Naive thymus-derived CD8-positive, alpha-beta T cell (primary cell): ENCODE measurements at regions of chr18 and their contacts with region 1.

Region 1: DNA sequence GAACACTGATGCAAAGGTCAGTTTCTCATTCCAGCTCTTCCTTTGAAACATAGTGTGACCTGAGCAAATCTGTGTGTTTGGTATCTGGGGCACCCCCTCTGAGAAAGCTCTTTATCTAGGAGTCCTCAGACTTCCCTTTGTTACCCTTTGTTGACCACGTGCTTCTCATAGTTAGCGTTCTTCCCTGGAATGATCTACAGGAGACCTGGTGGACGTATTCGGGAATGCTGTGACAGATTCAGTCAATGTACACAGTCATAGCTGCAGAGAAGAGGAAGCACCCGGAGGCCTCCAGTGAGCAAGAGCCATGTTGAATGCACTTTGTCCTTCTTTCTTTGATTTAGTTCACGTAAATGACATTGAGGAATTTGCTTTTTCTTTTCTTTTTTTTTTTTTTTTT is 10.7 kb upstream of the CHMP1B start:
- DNase-seq: no peak
- ATAC-seq: no peak
- H3K4me3 Mint-ChIP-seq: no peak overlapping the region
- H3K27ac Mint-ChIP-seq: no peak overlapping the region
- H3K4me1 Mint-ChIP-seq: no peaks in the 10 kb centered on the region
- H3K27me3 Mint-ChIP-seq: no peaks in the 10 kb centered on the region

Region 2: DNA sequence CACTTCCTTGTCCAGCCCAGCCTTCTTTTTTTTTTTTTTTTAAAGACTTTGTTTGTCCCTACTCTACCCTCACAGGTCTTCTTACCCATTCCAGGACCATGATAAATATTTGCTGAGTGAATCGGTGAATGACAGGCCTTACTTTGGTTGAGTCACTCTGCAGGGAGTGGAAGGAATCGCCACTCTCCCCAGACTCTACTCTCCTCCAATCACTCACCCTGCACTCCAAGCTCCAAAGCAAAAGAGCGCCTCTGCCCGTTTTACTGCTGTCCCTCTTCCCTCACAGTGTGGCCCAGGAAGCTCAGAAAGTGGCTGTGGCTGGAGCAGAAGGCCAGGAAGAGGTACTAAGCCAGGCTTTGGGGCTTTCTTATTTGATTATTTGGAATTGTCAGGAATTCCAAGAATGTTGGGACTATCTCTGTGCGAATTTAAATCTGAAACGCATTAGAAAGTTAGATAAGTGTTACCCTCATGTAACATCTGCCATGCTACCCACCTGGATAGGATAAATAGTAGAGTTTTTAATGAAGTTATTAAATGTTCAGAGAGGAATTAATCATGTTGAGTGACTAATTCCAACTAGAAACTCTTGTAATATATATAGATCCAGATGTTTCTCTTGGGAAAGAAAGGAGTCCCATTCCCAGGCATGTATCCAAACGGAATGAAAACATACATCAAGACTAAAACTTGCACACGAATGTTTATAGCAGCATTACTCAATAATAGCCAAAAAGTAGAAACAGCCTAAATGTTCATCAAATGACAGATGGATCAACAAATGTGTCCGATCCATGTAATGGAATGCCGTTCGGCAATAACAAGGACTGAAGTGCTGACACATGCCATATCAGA is 32.3 kb before region 1 on chr18:
- POLR2A ChIA-PET with region 1: no interaction called
- DNase-seq: no peak
- ATAC-seq: no peak
- H3K4me3 Mint-ChIP-seq: no peak overlapping the region
- H3K27ac Mint-ChIP-seq: no peak overlapping the region
- H3K4me1 Mint-ChIP-seq: no peaks in the 10 kb centered on the region
- H3K27me3 Mint-ChIP-seq: peaks cover 0 to 9% (median 2%) of the 10 kb centered on the region in 5 donors

Region 3: DNA sequence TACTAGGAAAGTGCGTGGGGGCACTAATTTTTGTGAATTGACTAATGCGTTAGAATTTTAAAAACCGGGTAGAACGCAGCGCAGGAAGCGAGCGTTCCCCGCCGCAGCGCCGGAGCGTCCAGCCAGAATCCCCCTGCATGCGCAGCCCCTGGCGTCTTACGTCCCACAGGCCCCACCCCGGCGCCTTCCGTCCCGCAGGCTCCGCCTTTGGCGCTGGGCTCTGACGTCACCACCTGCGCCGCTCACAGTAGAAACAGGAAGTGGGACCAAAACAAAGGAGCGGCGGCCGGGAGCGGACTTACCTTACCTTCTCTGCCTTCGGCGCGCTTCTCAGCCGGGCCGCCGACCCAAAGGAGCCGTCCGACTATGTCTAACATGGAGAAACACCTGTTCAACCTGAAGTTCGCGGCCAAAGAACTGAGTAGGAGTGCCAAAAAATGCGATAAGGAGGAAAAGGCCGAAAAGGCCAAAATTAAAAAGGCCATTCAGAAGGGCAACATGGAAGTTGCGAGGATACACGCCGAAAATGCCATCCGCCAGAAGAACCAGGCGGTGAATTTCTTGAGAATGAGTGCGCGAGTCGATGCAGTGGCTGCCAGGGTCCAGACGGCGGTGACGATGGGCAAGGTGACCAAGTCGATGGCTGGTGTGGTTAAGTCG is 10.8 kb after region 1 on chr18 and contains the start of gene CHMP1B:
- POLR2A ChIA-PET with region 1: interaction called, 10 read pairs
- DNase-seq: peak; percentile 92 to 98 (median 96)
- ATAC-seq: peak; percentile 81 to 82
- H3K4me3 Mint-ChIP-seq: peak within 1 kb of the TSS; percentile 92 to 100 (median 100)
- H3K27ac Mint-ChIP-seq: peak within 1 kb of the TSS; percentile 99 to 100 (median 100)
- H3K4me1 Mint-ChIP-seq: peaks cover 16 to 60% (median 41%) of the 10 kb centered on the region in 4 donors
- H3K27me3 Mint-ChIP-seq: no peaks in the 10 kb centered on the region
- polyA plus RNA-seq, gene CHMP1B: 45.2 to 58.0 (median 57.3) TPM